ENCODE measurements at regions of chr1 and their contacts with region 1.

Region 1: DNA sequence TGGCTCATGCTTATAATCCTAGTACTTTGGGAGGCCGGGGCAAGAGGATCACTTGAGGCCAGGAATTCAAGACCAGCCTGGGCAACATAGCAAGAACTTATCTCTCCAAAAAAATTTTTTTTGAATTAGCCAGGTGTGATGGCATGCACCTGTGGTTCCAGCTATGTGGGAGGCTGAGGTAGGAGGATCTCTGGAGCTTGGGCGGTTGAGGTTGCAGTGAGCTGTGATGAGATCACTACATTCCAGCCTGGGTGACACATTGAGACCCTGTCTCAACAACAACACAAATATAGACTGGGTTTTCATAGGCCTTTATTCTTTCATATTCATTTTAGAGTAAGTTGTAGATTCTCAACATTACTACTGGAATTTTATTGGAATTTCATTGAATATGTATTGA is 12.8 kb downstream of the MED18 start:
- DNase-seq: no peak
- H3K4me3 ChIP-seq: no peak overlapping the region
- H3K27ac ChIP-seq: no peak overlapping the region
- H3K4me1 ChIP-seq: no peaks in the 10 kb centered on the region
- H3K27me3 ChIP-seq: no peaks in the 10 kb centered on the region
- CTCF ChIP-seq: no peak

Region 2: DNA sequence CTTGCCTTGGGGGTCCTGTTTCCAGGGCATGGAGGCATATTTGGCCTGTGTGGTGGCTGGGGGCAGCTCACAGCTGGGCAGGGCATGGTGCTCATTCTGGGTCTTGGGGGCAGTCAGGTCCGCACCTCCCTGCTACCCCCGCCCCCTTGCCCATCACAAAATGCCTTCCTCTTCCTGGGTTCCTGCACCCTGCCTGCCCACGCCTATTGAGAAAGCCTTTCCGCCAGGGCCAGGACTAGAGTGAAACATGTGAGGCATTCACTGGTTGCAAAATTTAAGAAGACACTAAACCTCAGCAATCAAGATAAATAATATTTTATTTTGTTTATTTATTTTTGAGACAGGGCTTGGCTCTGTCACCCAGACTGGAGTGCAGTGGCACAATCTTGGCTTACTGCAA is 184.8 kb before region 1 on chr1:
- intact Hi-C with region 1: no loop called
- DNase-seq: no peak
- H3K4me3 ChIP-seq: no peak overlapping the region
- H3K27ac ChIP-seq: no peak overlapping the region
- H3K4me1 ChIP-seq: no peaks in the 10 kb centered on the region
- H3K27me3 ChIP-seq: no peaks in the 10 kb centered on the region
- CTCF ChIP-seq: no peak

Region 3: GRCh38 chr1:28176492-28177470 is 164.8 kb before region 1 on chr1 and contains the start of gene PTAFR:
- intact Hi-C with region 1: no loop called
- DNase-seq: no peak
- H3K4me3 ChIP-seq: no peak within 1 kb of the TSS
- H3K27ac ChIP-seq: peak within 1 kb of the TSS; percentile 40
- H3K4me1 ChIP-seq: peaks cover 14% of the 10 kb centered on the region
- H3K27me3 ChIP-seq: no peaks in the 10 kb centered on the region
- CTCF ChIP-seq: no peak
- total RNA-seq, gene PTAFR: 2.2 to 3.9 TPM

Region 4: GRCh38 chr1:28273216-28273860 is 68.3 kb before region 1 on chr1:
- intact Hi-C with region 1: loop called (anchors 10 kb)
- DNase-seq: no peak
- H3K4me3 ChIP-seq: no peak overlapping the region
- H3K27ac ChIP-seq: no peak overlapping the region
- H3K4me1 ChIP-seq: no peaks in the 10 kb centered on the region
- H3K27me3 ChIP-seq: no peaks in the 10 kb centered on the region
- CTCF ChIP-seq: no peak

Region 5: DNA sequence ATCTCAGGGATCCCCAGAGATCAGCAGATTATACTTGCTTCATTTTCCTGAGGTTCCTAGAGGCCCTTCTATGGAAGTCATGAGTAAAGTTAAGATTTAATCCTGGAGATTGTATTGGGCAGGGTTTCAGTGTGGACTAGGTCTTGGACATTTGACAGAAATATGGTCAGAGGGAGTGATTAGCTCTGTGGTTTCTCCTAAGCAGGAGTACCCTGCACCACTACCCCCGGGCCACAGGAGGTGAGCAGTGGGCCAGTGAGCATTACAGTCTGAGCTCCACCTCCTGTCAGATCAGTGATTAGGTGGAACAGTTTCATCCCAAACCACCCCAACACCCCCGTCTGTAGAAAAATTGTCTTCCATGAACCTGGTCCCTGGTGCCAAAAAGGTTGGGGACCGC is 71.1 kb after region 1 on chr1:
- intact Hi-C with region 1: no loop called
- DNase-seq: no peak
- H3K4me3 ChIP-seq: no peak overlapping the region
- H3K27ac ChIP-seq: no peak overlapping the region
- H3K4me1 ChIP-seq: no peaks in the 10 kb centered on the region
- H3K27me3 ChIP-seq: no peaks in the 10 kb centered on the region
- CTCF ChIP-seq: no peak

Region 6: DNA sequence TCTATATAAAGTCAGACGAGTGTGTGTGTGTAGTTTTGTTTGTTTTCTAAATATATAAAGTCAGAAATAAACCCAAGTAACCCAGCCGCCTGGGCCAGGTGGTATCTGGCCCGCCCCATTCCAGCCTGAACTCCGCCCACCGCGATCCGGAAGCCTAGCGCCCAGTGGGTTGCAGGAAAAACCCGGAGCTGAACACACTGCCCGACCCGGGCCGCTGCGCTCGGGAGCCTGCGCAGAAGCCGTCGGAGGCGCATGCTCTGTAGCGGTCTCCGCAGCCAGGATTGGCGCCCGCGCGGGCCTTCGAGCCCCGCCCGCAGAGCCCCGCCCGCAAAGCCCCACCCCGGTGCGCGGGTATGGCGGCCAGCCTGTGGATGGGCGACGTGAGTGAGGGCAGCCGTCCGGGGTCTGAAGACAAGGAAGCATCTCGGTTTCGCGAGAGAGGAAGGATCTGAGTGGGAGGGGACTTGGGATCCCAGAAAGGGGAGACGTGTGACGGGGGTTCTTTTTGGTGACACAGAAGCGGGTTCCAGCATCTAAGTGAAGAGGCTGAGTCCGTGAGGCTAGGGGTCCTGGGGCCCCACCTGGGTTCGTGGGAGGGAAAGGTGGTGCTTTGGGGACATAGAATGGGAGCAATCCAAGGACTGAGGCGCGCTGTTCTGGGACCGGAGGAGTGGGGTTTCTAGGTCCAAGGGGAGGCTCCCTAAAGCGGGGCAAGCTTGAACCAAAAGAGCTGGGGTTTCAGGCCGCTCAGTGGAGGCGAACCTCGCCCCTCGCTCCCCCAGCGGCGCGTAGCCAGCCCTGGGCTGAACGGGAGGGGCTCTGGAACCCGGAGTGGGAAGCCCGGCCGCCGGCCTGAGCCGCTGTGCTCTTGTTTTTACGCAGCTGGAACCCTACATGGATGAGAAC is 211.4 kb after region 1 on chr1 and contains the start of gene TRNAU1AP:
- intact Hi-C with region 1: no loop called
- DNase-seq: peak; percentile 98
- H3K4me3 ChIP-seq: peak within 1 kb of the TSS; percentile 89
- H3K27ac ChIP-seq: peak within 1 kb of the TSS; percentile 86
- H3K4me1 ChIP-seq: peaks cover 5% of the 10 kb centered on the region
- H3K27me3 ChIP-seq: no peaks in the 10 kb centered on the region
- CTCF ChIP-seq: no peak
- total RNA-seq, gene TRNAU1AP: 22.1 to 28.6 TPM

Measured in colonic mucosa (tissue), 4 donors.